ENCODE measurements at regions of chr13 and their contacts with region 1.

Region 1: DNA sequence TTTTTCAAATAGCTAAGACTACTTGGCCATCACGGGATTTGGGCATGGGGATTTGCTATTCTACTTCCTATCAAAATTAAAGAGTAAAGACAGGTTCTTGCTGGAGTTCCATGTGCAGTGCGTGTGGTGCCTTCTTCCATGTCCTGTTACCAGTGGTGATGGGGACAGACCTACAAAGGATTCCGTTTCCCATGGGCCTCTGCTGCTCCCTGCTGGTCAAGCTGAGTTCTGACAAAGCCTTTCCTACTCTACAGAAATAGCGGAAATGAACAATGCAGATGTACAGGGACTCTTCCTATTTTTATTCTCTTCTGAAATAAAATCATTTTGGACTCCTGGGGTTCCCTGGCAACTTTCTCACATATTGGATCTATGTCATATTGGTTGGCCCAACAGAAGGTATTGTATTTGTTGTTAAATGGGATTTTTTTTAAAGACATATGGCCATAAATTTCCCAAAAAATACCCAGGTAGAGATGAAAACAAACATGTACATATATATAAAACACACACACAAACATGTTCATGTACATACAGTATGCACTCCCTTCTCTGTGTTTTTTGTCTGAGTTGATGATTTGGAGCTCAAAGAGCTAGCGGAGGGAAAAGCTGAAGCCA is 90.5 kb upstream of the SLC15A1 start:
- DNase-seq: peak; percentile 61 to 80
- H3K4me3 ChIP-seq: no peak overlapping the region
- H3K27ac ChIP-seq: no peak overlapping the region
- H3K4me1 ChIP-seq: peaks cover 0 to 9% (median 4%) of the 10 kb centered on the region in 4 donors
- H3K27me3 ChIP-seq: no peaks in the 10 kb centered on the region
- CTCF ChIP-seq: peak; percentile 67 to 83

Region 2: GRCh38 chr13:99033814-99034213 is 190.8 kb after region 1 on chr13:
- intact Hi-C with region 1: loop called (anchors 10 kb)
- DNase-seq: no peak
- H3K4me3 ChIP-seq: no peak overlapping the region
- H3K27ac ChIP-seq: no peak overlapping the region
- H3K4me1 ChIP-seq: no peaks in the 10 kb centered on the region
- H3K27me3 ChIP-seq: no peaks in the 10 kb centered on the region
- CTCF ChIP-seq: peak; percentile 51 to 57

Measured in tibial artery (tissue), 4 donors.